ENCODE measurements at regions of chr2 and their contacts with region 1.

Region 1: GRCh38 chr2:173210270-173211196 is 134.9 kb downstream of the MAP3K20 start:
- DNase-seq: peak; percentile 68
- ATAC-seq: peak; percentile 77
- H3K4me3 Mint-ChIP-seq: no peak overlapping the region
- H3K27ac Mint-ChIP-seq: no peak overlapping the region
- H3K4me1 Mint-ChIP-seq: no peaks in the 10 kb centered on the region
- H3K27me3 Mint-ChIP-seq: no peaks in the 10 kb centered on the region

Region 2: DNA sequence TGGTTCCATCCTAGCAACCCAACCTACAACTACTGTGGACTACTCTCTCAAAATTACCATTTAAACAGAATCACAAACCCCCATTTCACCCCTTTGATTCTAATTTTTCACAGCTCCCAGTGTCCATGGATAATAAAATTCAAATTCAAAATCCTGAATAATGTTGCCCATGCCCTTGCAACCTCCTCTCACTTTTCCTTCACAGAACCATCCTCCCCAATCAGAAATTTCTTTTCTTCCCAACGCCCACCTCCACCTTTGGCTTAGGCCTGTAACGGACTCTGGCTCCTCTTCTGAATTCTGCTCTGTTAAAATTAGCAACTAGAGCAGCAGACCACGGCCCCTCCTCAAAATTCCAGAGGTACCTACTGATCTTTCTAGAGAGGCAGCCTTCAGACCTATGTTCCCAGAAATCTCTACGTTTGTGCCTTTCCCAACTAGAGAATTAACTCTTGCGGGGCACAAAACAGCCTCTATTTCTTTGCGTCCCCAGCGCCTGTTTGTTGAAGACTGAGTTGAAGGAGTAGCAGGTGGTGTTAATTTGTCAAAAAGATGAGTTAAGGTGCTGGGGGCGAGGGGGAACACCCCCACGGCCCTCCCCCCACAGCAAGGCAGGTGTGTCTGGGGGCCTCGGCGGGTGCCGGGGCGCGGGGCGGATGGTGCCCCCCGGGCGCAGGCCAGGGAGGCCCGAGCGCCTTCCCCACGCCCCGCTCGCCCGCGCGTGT is 135.3 kb before region 1 on chr2:
- CTCF ChIA-PET with region 1: interaction called, 14 read pairs
- POLR2A ChIA-PET with region 1: no interaction called
- DNase-seq: no peak
- ATAC-seq: no peak
- H3K4me3 Mint-ChIP-seq: peak overlapping the region; percentile 76
- H3K27ac Mint-ChIP-seq: peak overlapping the region; percentile 78
- H3K4me1 Mint-ChIP-seq: peaks cover 25% of the 10 kb centered on the region
- H3K27me3 Mint-ChIP-seq: peaks cover 20% of the 10 kb centered on the region

Region 3: DNA sequence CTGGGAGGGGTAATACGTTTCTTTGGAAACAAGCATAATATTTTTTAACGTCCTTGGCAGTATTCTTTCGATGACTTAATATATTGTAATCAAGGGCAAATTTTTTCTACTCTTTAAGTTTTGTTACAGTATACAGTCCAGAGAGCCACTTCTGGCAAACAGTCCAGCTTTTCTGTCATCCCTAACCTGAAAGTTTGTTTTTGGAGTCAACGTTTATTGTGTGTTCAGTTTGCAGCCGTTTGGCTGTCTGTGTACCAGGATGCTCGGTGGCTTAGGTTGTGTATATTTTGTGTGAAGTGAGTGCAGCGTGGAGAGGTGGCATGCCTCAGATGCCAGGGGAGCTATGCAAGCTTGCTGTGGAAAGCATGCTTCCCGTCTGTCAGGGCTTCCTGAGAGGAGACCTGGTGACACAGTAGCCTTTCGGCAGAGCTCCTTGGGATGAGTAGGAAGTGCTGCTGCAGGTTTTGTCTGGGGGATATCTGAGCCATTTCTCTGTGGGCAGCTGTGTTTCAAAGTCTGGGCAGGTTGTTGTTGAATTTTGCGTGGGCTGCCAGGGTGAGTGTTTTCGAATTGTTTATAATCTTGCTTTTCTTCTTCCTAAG is 120.2 kb before region 1 on chr2:
- CTCF ChIA-PET with region 1: interaction called, 22 read pairs
- POLR2A ChIA-PET with region 1: no interaction called
- DNase-seq: no peak
- ATAC-seq: no peak
- H3K4me3 Mint-ChIP-seq: no peak overlapping the region
- H3K27ac Mint-ChIP-seq: no peak overlapping the region
- H3K4me1 Mint-ChIP-seq: no peaks in the 10 kb centered on the region
- H3K27me3 Mint-ChIP-seq: peaks cover 9% of the 10 kb centered on the region

Region 4: DNA sequence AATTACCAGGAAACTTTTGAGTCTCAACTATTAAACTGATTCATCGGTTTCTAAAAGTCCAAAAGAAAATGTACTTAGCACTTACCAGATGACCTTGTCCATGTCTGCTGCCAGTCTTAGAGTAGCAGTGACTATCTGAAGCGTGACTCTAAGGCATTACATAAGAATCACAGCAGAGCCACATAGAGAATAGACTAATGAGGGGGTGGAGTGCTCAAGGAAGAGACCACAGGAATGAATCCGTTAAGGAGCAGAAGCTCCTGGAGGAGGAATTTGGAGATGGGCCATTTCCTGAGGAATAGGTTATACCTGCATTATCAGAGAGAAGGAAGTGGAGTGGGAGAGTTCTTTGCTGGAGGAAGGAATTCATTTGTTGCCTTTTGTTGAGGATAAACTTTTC is 18.9 kb before region 1 on chr2:
- CTCF ChIA-PET with region 1: interaction called, 10 read pairs
- POLR2A ChIA-PET with region 1: no interaction called
- DNase-seq: no peak
- ATAC-seq: no peak
- H3K4me3 Mint-ChIP-seq: no peak overlapping the region
- H3K27ac Mint-ChIP-seq: no peak overlapping the region
- H3K4me1 Mint-ChIP-seq: peaks cover 7% of the 10 kb centered on the region
- H3K27me3 Mint-ChIP-seq: no peaks in the 10 kb centered on the region

Region 5: DNA sequence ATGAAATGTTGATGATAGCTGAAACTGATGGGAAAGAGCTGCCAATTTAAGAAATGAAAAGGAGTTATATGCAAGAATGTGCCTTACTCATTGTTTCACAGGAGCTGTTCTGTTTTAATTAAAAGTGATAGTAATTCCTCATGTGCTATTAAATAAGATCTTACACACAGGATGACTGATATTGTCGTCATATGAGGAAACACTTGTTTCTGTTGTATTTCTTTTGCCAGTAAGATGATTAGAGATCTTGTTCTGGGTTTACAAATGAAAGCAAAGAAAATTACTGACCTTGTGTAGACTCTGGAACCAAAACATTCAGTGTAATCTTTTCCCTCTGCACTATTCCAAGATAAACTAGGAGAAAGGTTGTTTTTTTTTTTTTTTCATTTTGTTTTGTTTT is 11.2 kb before region 1 on chr2:
- CTCF ChIA-PET with region 1: interaction called, 22 read pairs
- POLR2A ChIA-PET with region 1: no interaction called
- DNase-seq: no peak
- ATAC-seq: no peak
- H3K4me3 Mint-ChIP-seq: no peak overlapping the region
- H3K27ac Mint-ChIP-seq: no peak overlapping the region
- H3K4me1 Mint-ChIP-seq: no peaks in the 10 kb centered on the region
- H3K27me3 Mint-ChIP-seq: no peaks in the 10 kb centered on the region

Region 6: GRCh38 chr2:173347305-173348168 is 137.0 kb after region 1 on chr2:
- CTCF ChIA-PET with region 1: no interaction called
- POLR2A ChIA-PET with region 1: no interaction called
- DNase-seq: no peak
- ATAC-seq: no peak
- H3K4me3 Mint-ChIP-seq: no peak overlapping the region
- H3K27ac Mint-ChIP-seq: no peak overlapping the region
- H3K4me1 Mint-ChIP-seq: peaks cover 3% of the 10 kb centered on the region
- H3K27me3 Mint-ChIP-seq: peaks cover 25% of the 10 kb centered on the region